Ascending aorta (tissue), 2 donors: ENCODE measurements at regions of chr11 and their contacts with region 1.

Region 1: DNA sequence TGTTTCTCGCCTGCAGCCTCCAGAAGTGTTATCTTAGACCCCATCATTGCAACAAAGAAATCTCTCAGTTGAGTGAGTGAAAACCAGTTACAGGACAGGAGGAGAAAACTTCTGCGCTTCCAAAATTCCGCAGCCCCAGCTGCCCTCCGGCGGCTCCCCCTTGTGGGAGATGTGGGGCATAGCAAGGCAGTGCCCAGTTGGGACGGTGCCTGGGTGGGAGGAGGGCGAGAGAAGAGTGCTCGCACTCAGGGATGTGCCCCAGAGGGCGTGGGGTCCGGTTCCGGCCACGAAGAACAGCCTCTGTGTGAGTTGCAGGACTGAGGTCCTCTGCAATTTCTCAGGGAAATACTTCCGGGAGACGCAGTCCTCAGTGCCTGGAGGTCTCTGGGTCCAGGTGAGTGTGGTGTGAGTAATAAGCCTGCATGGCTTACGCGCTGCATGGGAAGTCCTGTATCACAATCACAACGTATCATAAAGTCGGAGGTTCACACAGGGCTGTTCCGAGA is 87.0 kb upstream of the BLID start:
- DNase-seq: peak in 1 of 2 donors; percentile 87
- H3K4me3 ChIP-seq: peak overlapping the region; percentile 29 to 71
- H3K27ac ChIP-seq: peak overlapping the region; percentile 86 to 90
- H3K4me1 ChIP-seq: peaks cover 0 to 51% of the 10 kb centered on the region in 2 donors
- H3K27me3 ChIP-seq: no peaks in the 10 kb centered on the region
- CTCF ChIP-seq: peak; percentile 95 to 98 (median 97)

Region 2: GRCh38 chr11:121741761-121742361 is 461.1 kb before region 1 on chr11:
- intact Hi-C with region 1: loop called (anchors 10 kb)
- DNase-seq: peak; percentile 26 to 95
- H3K4me3 ChIP-seq: peak overlapping the region; percentile 7 to 21
- H3K27ac ChIP-seq: peak overlapping the region; percentile 83 to 90
- H3K4me1 ChIP-seq: peaks cover 9 to 19% of the 10 kb centered on the region in 2 donors
- H3K27me3 ChIP-seq: no peaks in the 10 kb centered on the region
- CTCF ChIP-seq: no peak

Region 3: DNA sequence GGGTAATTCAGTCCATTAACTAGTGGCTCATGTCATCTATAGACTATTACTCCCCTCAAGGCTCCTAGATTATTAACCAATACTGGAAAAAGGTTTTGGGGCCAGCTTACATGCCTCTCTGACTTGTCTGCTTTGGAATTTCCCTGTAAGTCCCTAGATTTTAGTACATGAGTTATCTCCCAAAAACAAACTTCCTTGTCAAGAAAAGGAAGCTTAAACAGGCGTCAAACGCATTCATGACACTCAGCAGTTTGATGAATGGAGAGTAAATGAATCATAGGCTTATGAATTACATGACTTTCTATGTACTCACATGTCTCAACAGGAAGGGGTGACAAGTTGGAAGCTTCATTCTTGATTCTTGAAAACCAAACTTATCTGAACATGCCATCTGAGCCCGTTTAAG is 157.8 kb before region 1 on chr11:
- intact Hi-C with region 1: loop called (anchors 5 kb)
- DNase-seq: no peak
- H3K4me3 ChIP-seq: no peak overlapping the region
- H3K27ac ChIP-seq: peak overlapping the region; percentile 89 to 98
- H3K4me1 ChIP-seq: peaks cover 0 to 16% of the 10 kb centered on the region in 2 donors
- H3K27me3 ChIP-seq: no peaks in the 10 kb centered on the region
- CTCF ChIP-seq: no peak

Region 4: DNA sequence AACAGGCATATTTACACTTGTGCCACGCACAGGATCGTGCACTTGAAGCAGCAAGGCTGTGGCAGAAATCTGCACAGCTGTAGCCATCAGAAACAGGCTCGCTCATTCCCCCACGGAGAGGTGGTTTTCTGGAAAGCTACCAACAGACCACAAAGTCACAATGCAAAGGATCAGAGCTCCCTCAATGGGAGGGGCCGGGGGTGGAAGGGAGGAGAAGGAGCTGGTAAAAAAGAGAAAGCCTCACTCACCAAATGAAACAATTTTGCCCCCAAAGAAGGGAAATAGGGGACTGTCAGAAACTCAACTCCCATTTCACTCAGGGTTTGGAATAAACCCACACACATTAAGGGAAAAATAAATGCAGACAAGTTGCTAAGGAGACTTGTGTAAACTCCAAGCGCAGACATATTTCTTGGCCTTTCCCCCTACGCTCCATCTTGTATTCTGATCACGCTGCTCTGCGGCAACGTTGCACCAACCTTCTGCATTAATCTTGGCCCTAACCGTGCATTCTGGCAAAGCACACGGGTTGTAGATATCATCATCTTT is 43.8 kb before region 1 on chr11:
- intact Hi-C with region 1: loop called (anchors 5 kb)
- DNase-seq: no peak
- H3K4me3 ChIP-seq: peak overlapping the region; percentile 32 to 62
- H3K27ac ChIP-seq: peak overlapping the region; percentile 80 to 94
- H3K4me1 ChIP-seq: peaks cover 11 to 38% of the 10 kb centered on the region in 2 donors
- H3K27me3 ChIP-seq: no peaks in the 10 kb centered on the region
- CTCF ChIP-seq: no peak

Region 5: GRCh38 chr11:122186439-122187080 is 16.4 kb before region 1 on chr11:
- intact Hi-C with region 1: loop called (anchors 2 kb)
- DNase-seq: peak in 1 of 2 donors; percentile 81
- H3K4me3 ChIP-seq: no peak overlapping the region
- H3K27ac ChIP-seq: peak overlapping the region; percentile 89 to 92
- H3K4me1 ChIP-seq: peaks cover 7 to 35% of the 10 kb centered on the region in 2 donors
- H3K27me3 ChIP-seq: no peaks in the 10 kb centered on the region
- CTCF ChIP-seq: no peak